Pancreas (tissue), 10 donors: ENCODE measurements at regions of chr4 and their contacts with region 1.

Region 1: GRCh38 chr4:16264798-16265197 is 38.5 kb upstream of the TAPT1 start:
- DNase-seq: no peak
- ATAC-seq: peak in 3 of 4 donors; percentile 78 to 84 (median 78)
- H3K4me3 ChIP-seq: no peak overlapping the region
- H3K27ac ChIP-seq: no peak overlapping the region
- H3K4me1 ChIP-seq: no peaks in the 10 kb centered on the region
- H3K27me3 ChIP-seq: no peaks in the 10 kb centered on the region
- CTCF ChIP-seq: peak in 3 of 4 donors; percentile 32 to 42 (median 40)

Region 2: GRCh38 chr4:16150716-16151115 is 114.1 kb before region 1 on chr4:
- intact Hi-C with region 1: no loop called
- DNase-seq: no peak
- ATAC-seq: no peak
- H3K4me3 ChIP-seq: no peak overlapping the region
- H3K27ac ChIP-seq: no peak overlapping the region
- H3K4me1 ChIP-seq: no peaks in the 10 kb centered on the region
- H3K27me3 ChIP-seq: no peaks in the 10 kb centered on the region
- CTCF ChIP-seq: no peak

Region 3: GRCh38 chr4:16205298-16206164 is 59.3 kb before region 1 on chr4:
- intact Hi-C with region 1: loop called in 1 of 3 experiments (anchors 10 kb)
- DNase-seq: no peak
- ATAC-seq: peak; percentile 64 to 91 (median 82)
- H3K4me3 ChIP-seq: no peak overlapping the region
- H3K27ac ChIP-seq: no peak overlapping the region
- H3K4me1 ChIP-seq: peaks cover 0 to 6% (median 0%) of the 10 kb centered on the region in 3 donors
- H3K27me3 ChIP-seq: no peaks in the 10 kb centered on the region
- CTCF ChIP-seq: peak in 3 of 4 donors; percentile 34 to 51 (median 38)

Region 4: DNA sequence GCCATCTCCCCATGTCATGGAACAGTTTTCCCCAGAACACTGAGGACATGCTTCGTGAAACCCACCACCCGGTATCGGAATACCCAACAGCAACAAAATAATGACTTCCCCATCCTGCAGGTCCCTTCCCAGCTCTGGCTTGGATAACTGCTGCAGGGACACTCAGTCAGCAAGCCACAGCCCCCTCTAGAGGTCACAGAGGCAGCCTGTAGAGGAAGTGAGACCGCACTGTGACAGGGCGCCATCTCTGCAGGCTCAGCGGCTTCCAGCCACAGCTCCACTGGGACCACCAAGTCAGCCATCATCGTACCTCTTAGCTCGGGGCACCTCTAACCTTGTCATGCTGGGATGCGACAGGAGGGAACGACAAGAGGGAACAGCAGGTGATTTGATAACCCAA is 317.7 kb after region 1 on chr4:
- intact Hi-C with region 1: no loop called
- DNase-seq: peak in 1 of 6 donors; percentile 23
- ATAC-seq: no peak
- H3K4me3 ChIP-seq: no peak overlapping the region
- H3K27ac ChIP-seq: no peak overlapping the region
- H3K4me1 ChIP-seq: no peaks in the 10 kb centered on the region
- H3K27me3 ChIP-seq: no peaks in the 10 kb centered on the region
- CTCF ChIP-seq: no peak